Right lobe of liver (tissue), 6 donors: ENCODE measurements at regions of chr18 and their contacts with region 1.

Region 1: DNA sequence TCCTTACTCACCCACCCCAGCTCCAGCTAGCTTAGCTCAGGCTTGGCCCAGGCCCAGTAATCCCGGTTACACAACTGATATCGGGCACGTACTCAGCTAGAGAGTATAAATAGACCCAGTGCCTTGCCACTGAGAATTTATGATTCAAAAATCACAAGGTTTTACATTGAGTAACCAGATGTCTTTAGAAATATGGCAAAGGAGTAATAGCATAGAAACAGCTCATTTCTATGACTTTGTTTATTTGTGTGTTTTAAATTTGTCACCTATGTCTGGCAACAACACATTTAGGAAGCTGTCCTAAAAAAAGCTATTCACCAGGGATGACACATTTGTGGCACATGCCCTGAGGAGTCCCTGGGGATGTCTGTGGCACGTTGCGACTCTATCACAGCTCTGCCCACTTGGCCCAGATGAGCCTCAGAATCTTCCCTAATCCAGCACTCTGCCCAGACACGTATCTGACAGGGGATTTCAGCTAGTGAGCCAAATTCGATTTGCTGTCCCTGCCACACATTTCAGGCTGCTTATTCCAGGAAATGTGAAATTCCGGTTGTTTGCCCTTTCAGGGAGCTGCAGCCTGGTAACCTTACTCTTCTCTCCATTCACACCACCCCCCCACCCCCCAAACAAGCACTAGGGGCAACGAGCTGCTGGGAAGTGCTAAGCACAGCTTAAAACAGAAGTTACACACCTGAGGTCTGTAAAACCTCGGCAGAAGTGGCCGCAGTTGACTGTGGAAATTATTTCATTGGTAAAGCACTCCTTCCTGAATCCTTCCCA is 85.4 kb upstream of the ZCCHC2 start:
- DNase-seq: peak; percentile 90 to 92 (median 92)
- ATAC-seq: peak; percentile 85 to 92 (median 89)
- H3K4me3 ChIP-seq: peak overlapping the region in 2 of 3 donors; percentile 23 to 27
- H3K27ac ChIP-seq: peak overlapping the region; percentile 83 to 93 (median 84)
- H3K4me1 ChIP-seq: peaks cover 0 to 24% (median 14%) of the 10 kb centered on the region in 4 donors
- H3K27me3 ChIP-seq: no peaks in the 10 kb centered on the region
- CTCF ChIP-seq: no peak
- POLR2A ChIP-seq: no peak

Region 2: GRCh38 chr18:62526098-62527025 is 88.9 kb after region 1 on chr18:
- intact Hi-C with region 1: loop called in 1 of 2 experiments (anchors 5 kb)
- DNase-seq: peak; percentile 92 to 96 (median 93)
- ATAC-seq: peak; percentile 24 to 52 (median 36)
- H3K4me3 ChIP-seq: peak overlapping the region; percentile 58 to 95 (median 89)
- H3K27ac ChIP-seq: peak overlapping the region; percentile 95 to 99 (median 95)
- H3K4me1 ChIP-seq: peaks cover 0 to 27% (median 13%) of the 10 kb centered on the region in 4 donors
- H3K27me3 ChIP-seq: no peaks in the 10 kb centered on the region
- CTCF ChIP-seq: no peak
- POLR2A ChIP-seq: peak; percentile 75